Activated B cell treated with CpG ODN at 0.5 μM for 24 hours (primary cell): ENCODE measurements at regions of chr15 and their contacts with region 1.

Region 1: GRCh38 chr15:84748274-84749110 is at the start of gene ZNF592:
- DNase-seq: peak; percentile 88
- ATAC-seq: peak; percentile 62
- H3K4me3 Mint-ChIP-seq: peak within 1 kb of the TSS; percentile 97
- H3K27ac Mint-ChIP-seq: peak within 1 kb of the TSS; percentile 99
- H3K4me1 Mint-ChIP-seq: peaks cover 70% of the 10 kb centered on the region
- H3K27me3 Mint-ChIP-seq: no peaks in the 10 kb centered on the region
- CTCF ChIP-seq: no peak
- total RNA-seq, gene ZNF592: 40.6 and 44.3 TPM in 2 replicates

Region 2: GRCh38 chr15:84600851-84601838 is 147.3 kb before region 1 on chr15 and contains the start of gene ZSCAN2:
- CTCF ChIA-PET with region 1: interaction called, 3 read pairs
- POLR2A ChIA-PET with region 1: interaction called, 4 read pairs
- intact Hi-C with region 1: loop called (anchors 2 kb)
- DNase-seq: peak; percentile 86
- ATAC-seq: peak; percentile 94
- H3K4me3 Mint-ChIP-seq: peak within 1 kb of the TSS; percentile 97
- H3K27ac Mint-ChIP-seq: peak within 1 kb of the TSS; percentile 88
- H3K4me1 Mint-ChIP-seq: peaks cover 73% of the 10 kb centered on the region
- H3K27me3 Mint-ChIP-seq: no peaks in the 10 kb centered on the region
- CTCF ChIP-seq: no peak
- total RNA-seq, gene ZSCAN2: 16.0 and 18.7 TPM in 2 replicates

Region 3: DNA sequence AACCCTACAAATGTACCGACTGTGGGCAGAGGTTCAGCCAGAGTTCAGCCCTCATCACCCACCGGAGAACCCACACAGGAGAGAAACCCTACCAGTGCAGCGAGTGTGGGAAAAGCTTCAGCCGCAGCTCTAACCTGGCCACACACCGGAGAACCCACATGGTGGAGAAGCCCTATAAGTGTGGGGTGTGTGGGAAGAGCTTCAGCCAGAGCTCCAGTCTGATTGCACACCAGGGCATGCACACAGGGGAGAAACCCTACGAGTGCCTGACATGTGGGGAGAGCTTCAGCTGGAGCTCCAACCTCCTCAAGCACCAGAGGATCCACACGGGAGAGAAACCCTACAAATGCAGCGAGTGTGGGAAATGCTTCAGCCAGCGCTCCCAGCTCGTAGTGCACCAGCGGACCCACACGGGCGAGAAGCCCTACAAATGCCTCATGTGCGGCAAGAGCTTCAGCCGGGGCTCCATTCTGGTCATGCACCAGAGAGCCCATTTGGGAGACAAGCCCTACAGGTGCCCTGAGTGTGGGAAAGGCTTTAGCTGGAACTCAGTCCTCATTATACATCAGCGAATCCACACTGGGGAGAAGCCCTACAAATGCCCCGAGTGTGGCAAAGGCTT is 127.0 kb before region 1 on chr15:
- CTCF ChIA-PET with region 1: no interaction called
- POLR2A ChIA-PET with region 1: no interaction called
- intact Hi-C with region 1: no loop called
- DNase-seq: no peak
- ATAC-seq: no peak
- H3K4me3 Mint-ChIP-seq: no peak overlapping the region
- H3K27ac Mint-ChIP-seq: no peak overlapping the region
- H3K4me1 Mint-ChIP-seq: peaks cover under 1% of the 10 kb centered on the region
- H3K27me3 Mint-ChIP-seq: no peaks in the 10 kb centered on the region
- CTCF ChIP-seq: no peak

Region 4: GRCh38 chr15:84685304-84685703 is 63.2 kb before region 1 on chr15:
- CTCF ChIA-PET with region 1: no interaction called
- POLR2A ChIA-PET with region 1: no interaction called
- intact Hi-C with region 1: loop called (anchors 2 kb)
- DNase-seq: no peak
- ATAC-seq: no peak
- H3K4me3 Mint-ChIP-seq: no peak overlapping the region
- H3K27ac Mint-ChIP-seq: no peak overlapping the region
- H3K4me1 Mint-ChIP-seq: peaks cover 43% of the 10 kb centered on the region
- H3K27me3 Mint-ChIP-seq: no peaks in the 10 kb centered on the region
- CTCF ChIP-seq: no peak

Region 5: DNA sequence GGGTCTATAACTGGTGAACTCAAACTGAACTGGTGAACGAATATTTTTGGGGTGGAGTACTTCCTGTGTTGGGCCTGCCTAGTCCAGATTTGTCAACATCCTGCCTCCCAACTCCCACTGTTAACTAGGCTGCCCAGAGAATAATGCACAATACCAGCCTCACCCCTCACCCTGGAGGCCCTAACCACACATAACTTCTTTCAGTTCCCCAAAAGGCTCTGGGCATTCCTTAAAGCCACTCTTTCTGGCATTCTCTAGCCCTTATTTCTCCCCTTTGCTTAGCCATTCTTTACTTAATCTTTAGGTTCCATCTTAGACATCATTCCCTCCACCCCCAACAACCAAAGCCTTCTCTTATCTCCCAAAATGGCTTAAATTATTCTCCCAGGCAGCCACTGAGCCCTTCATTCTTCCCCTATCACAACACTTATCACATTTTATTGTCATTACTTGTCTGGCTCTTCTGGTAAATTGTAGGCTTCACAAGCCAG is 23.4 kb before region 1 on chr15:
- CTCF ChIA-PET with region 1: interaction called, 3 read pairs
- POLR2A ChIA-PET with region 1: interaction called, 23 read pairs
- intact Hi-C with region 1: no loop called
- DNase-seq: no peak
- ATAC-seq: peak; percentile 80
- H3K4me3 Mint-ChIP-seq: peak overlapping the region; percentile 59
- H3K27ac Mint-ChIP-seq: peak overlapping the region; percentile 89
- H3K4me1 Mint-ChIP-seq: peaks cover 58% of the 10 kb centered on the region
- H3K27me3 Mint-ChIP-seq: no peaks in the 10 kb centered on the region
- CTCF ChIP-seq: no peak

Region 6: DNA sequence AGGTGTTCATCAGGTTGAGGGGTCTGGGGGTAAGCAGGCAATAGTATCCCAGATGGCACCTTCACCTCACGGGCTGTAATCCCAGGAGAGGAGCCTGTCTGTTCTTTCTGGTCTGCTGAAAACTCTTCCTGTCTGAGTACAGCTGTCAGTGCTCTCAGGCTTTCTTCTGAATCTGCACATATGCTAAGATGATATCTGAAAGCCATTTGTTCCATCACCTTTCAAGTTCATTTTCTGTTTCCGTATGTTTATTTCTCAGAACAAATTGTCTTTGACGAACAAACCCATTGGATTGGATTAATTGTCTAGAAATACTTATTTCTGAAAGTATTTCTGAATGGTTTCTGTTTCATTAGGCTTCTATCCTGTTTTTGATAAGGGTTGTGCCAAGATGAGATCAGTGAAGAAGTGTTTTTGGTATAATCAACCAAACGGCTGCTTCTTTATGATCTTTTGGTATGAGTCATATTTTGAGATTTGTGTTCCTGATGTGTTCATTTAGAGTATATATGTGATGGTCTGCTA is 13.2 kb after region 1 on chr15:
- CTCF ChIA-PET with region 1: no interaction called
- POLR2A ChIA-PET with region 1: interaction called, 5 read pairs
- intact Hi-C with region 1: loop called (anchors 2 kb)
- DNase-seq: no peak
- ATAC-seq: peak; percentile 65
- H3K4me3 Mint-ChIP-seq: no peak overlapping the region
- H3K27ac Mint-ChIP-seq: no peak overlapping the region
- H3K4me1 Mint-ChIP-seq: peaks cover 4% of the 10 kb centered on the region
- H3K27me3 Mint-ChIP-seq: no peaks in the 10 kb centered on the region
- CTCF ChIP-seq: no peak

Region 7: GRCh38 chr15:85010386-85011159 is 262.1 kb after region 1 on chr15:
- CTCF ChIA-PET with region 1: no interaction called
- POLR2A ChIA-PET with region 1: no interaction called
- intact Hi-C with region 1: no loop called
- DNase-seq: no peak
- ATAC-seq: peak; percentile 75
- H3K4me3 Mint-ChIP-seq: peak overlapping the region; percentile 33
- H3K27ac Mint-ChIP-seq: peak overlapping the region; percentile 74
- H3K4me1 Mint-ChIP-seq: peaks cover 61% of the 10 kb centered on the region
- H3K27me3 Mint-ChIP-seq: no peaks in the 10 kb centered on the region
- CTCF ChIP-seq: no peak